Activated B cell treated with CpG ODN at 0.5 μM for 24 hours (primary cell): ENCODE measurements at regions of chr17 and their contacts with region 1.

Region 1: GRCh38 chr17:3636154-3636907 is at the starts of genes CTNS and SHPK:
- DNase-seq: peak; percentile 93
- ATAC-seq: peak; percentile 98
- H3K4me3 Mint-ChIP-seq: peak within 1 kb of the TSS; percentile 98
- H3K27ac Mint-ChIP-seq: peak within 1 kb of the TSS; percentile 100
- H3K4me1 Mint-ChIP-seq: peaks cover 26% of the 10 kb centered on the region
- H3K27me3 Mint-ChIP-seq: no peaks in the 10 kb centered on the region
- CTCF ChIP-seq: no peak
- total RNA-seq, gene CTNS: 12.8 and 13.5 TPM in 2 replicates
- total RNA-seq, gene SHPK: 8.1 and 9.5 TPM in 2 replicates

Region 2: GRCh38 chr17:2511462-2512369 is 1124.6 kb before region 1 on chr17 and contains the start of gene METTL16:
- CTCF ChIA-PET with region 1: no interaction called
- POLR2A ChIA-PET with region 1: no interaction called
- intact Hi-C with region 1: loop called (anchors 1 kb)
- DNase-seq: peak; percentile 84
- ATAC-seq: peak; percentile 99
- H3K4me3 Mint-ChIP-seq: no peak within 1 kb of the TSS
- H3K27ac Mint-ChIP-seq: peak within 1 kb of the TSS; percentile 36
- H3K4me1 Mint-ChIP-seq: peaks cover 10% of the 10 kb centered on the region
- H3K27me3 Mint-ChIP-seq: no peaks in the 10 kb centered on the region
- CTCF ChIP-seq: no peak
- total RNA-seq, gene METTL16: 49.4 and 57.2 TPM in 2 replicates

Region 3: GRCh38 chr17:3167574-3167973 is 468.8 kb before region 1 on chr17:
- CTCF ChIA-PET with region 1: no interaction called
- POLR2A ChIA-PET with region 1: no interaction called
- intact Hi-C with region 1: loop called (anchors 10 kb)
- DNase-seq: no peak
- ATAC-seq: peak; percentile 71
- H3K4me3 Mint-ChIP-seq: peak overlapping the region; percentile 13
- H3K27ac Mint-ChIP-seq: no peak overlapping the region
- H3K4me1 Mint-ChIP-seq: peaks cover 18% of the 10 kb centered on the region
- H3K27me3 Mint-ChIP-seq: peaks cover 4% of the 10 kb centered on the region
- CTCF ChIP-seq: no peak

Region 4: DNA sequence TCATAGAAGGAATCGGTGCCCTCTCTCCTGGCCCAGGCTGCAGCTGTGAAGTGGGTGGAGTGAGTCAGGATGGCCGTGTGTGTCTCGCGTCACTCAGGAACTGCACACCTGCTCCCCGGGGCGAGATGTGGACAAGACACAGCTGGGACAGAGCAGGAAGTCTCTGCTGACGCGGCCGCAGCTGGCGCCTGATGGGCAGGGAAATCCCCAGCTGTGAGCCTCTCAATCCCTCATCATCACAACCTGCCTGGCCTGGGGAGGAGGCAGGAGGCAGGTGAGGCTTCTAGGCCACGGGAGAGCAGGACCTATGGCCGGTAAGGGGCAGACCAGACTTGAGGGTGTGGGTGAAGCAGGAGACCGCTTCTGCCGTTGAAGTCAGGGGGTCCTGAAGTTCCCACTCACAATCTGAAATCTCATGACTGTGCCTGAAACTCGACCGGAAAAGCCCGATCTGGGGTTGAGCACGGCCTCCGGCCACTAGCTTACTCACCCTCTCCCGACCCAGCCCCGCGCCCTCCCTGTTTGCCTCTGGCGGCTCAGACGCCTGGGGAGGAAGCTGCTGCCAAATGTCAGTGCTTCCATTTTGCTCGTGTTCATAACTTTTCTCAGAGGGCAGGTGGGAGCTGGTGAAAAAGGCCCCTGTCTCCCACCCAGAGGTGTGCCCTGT is 77.6 kb before region 1 on chr17:
- CTCF ChIA-PET with region 1: interaction called, 3 read pairs
- POLR2A ChIA-PET with region 1: interaction called, 14 read pairs
- intact Hi-C with region 1: loop called (anchors 2 kb)
- DNase-seq: peak; percentile 64
- ATAC-seq: peak; percentile 73
- H3K4me3 Mint-ChIP-seq: peak overlapping the region; percentile 61
- H3K27ac Mint-ChIP-seq: peak overlapping the region; percentile 88
- H3K4me1 Mint-ChIP-seq: peaks cover 49% of the 10 kb centered on the region
- H3K27me3 Mint-ChIP-seq: peaks cover 6% of the 10 kb centered on the region
- CTCF ChIP-seq: no peak

Region 5: GRCh38 chr17:3657874-3658783 is 21.8 kb after region 1 on chr17:
- CTCF ChIA-PET with region 1: no interaction called
- POLR2A ChIA-PET with region 1: no interaction called
- intact Hi-C with region 1: no loop called
- DNase-seq: no peak
- ATAC-seq: no peak
- H3K4me3 Mint-ChIP-seq: no peak overlapping the region
- H3K27ac Mint-ChIP-seq: no peak overlapping the region
- H3K4me1 Mint-ChIP-seq: peaks cover 3% of the 10 kb centered on the region
- H3K27me3 Mint-ChIP-seq: no peaks in the 10 kb centered on the region
- CTCF ChIP-seq: no peak

Region 6: GRCh38 chr17:3668279-3669085 is 32.2 kb after region 1 on chr17 and contains the starts of genes EMC6 and TAX1BP3:
- CTCF ChIA-PET with region 1: no interaction called
- POLR2A ChIA-PET with region 1: interaction called, 22 read pairs
- intact Hi-C with region 1: loop called (anchors 1 kb)
- DNase-seq: peak; percentile 100
- ATAC-seq: peak; percentile 88
- H3K4me3 Mint-ChIP-seq: peak within 1 kb of the TSS; percentile 95
- H3K27ac Mint-ChIP-seq: peak within 1 kb of the TSS; percentile 92
- H3K4me1 Mint-ChIP-seq: peaks cover 21% of the 10 kb centered on the region
- H3K27me3 Mint-ChIP-seq: no peaks in the 10 kb centered on the region
- CTCF ChIP-seq: no peak
- total RNA-seq, gene EMC6: 33.8 and 38.0 TPM in 2 replicates
- total RNA-seq, gene TAX1BP3: 15.1 and 16.4 TPM in 2 replicates

Region 7: DNA sequence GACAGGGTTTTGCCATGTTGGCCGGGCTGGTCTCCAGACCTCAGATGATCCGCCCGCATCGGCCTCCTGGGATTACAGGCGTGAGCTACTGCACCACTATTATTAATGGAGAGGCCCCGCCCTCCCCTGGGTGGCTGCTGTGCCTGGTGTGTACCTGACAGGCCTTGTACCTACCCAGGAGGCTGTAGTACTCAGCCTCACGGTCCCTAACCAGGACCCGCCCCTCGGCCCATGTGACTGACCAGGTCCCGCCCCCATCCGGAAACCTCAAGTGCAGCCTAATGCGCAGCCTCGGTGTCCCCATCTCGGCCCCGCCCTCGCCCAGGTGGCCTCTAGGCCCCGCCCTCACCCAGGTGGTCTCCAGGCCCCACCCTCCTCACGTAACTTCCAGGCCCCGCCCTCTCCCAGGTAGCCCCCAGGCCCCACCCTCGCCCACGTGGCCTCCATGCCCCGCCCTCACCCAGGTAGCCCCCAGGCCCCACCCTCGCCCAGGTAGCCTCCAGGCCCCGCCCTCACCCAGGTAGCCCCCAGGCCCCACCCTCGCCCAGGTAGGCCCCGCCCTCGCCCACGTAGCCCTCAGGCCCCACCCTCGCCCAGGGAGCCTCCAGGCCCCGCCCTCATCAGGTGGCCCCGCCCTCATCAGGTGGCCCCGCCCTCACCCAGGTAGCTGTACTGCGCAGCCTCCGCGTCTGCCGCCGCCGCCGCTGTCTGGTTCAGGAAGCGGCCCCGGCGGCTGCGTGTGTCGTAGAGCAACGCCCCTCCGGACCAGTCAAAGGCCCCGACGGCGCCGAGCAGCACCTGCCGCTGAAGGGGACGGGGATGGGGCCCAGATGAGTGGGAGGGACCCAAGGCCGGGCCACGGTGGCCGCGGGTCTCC is 118.4 kb after region 1 on chr17:
- CTCF ChIA-PET with region 1: no interaction called
- POLR2A ChIA-PET with region 1: interaction called, 10 read pairs
- intact Hi-C with region 1: no loop called
- DNase-seq: peak; percentile 65
- ATAC-seq: peak; percentile 97
- H3K4me3 Mint-ChIP-seq: peak overlapping the region; percentile 53
- H3K27ac Mint-ChIP-seq: no peak overlapping the region
- H3K4me1 Mint-ChIP-seq: peaks cover 21% of the 10 kb centered on the region
- H3K27me3 Mint-ChIP-seq: no peaks in the 10 kb centered on the region
- CTCF ChIP-seq: no peak

Region 8: DNA sequence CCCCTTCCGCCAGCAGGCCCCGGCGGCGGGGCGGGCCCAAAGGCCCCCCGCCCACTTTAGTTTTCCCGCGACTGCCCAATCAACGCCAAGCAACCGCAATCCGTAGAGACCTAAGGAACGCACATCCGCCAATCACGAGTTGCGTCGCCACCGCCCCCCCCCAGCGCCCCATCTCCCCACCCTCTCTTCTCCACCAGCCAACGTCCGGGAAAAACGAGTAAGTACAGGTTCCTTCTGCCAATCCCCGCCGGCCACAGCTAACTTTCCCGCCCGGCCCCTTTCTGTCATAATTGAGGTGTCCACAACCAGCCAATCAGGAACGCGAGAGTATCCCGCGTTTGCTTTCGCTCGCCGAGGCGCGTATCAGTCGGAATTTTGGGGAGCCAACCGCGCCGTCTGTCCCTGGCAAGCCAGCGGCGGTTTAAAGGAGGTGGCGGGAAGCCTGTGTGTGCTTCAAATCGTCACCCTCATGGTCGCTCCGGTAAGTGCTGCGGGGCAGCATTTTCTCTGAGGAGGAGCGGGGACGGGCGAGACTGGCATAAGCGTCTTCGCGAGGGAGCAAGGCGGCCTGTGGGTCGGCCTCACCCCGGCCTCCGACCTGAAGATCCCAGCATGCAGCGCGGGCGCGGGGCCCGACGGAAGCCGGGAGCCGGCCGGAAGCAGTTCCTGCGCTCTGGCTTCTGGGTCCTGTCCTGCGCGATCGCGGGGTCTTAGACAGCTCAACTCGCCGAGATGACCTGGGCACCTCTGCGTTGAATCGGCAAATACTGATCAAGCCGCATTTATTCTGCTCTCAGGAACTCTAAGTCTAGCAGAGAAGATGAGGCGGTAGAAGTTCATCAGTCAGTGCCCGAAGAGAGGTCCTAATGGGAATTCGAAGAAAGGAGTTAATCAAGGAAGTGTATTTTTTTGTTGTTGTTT is 1850.1 kb after region 1 on chr17 and contains the start of gene MIS12:
- CTCF ChIA-PET with region 1: no interaction called
- POLR2A ChIA-PET with region 1: no interaction called
- intact Hi-C with region 1: loop called (anchors 5 kb)
- DNase-seq: peak; percentile 84
- ATAC-seq: peak; percentile 87
- H3K4me3 Mint-ChIP-seq: peak within 1 kb of the TSS; percentile 94
- H3K27ac Mint-ChIP-seq: peak within 1 kb of the TSS; percentile 98
- H3K4me1 Mint-ChIP-seq: peaks cover 43% of the 10 kb centered on the region
- H3K27me3 Mint-ChIP-seq: no peaks in the 10 kb centered on the region
- CTCF ChIP-seq: no peak
- total RNA-seq, gene MIS12: 29.7 and 31.2 TPM in 2 replicates